ENCODE measurements at regions of chr6 and their contacts with region 1.

Region 1: GRCh38 chr6:15948930-15949900 is 179.7 kb upstream of the MYLIP start:
- DNase-seq: no peak
- H3K4me3 ChIP-seq: no peak overlapping the region
- CTCF ChIP-seq: no peak

Region 2: DNA sequence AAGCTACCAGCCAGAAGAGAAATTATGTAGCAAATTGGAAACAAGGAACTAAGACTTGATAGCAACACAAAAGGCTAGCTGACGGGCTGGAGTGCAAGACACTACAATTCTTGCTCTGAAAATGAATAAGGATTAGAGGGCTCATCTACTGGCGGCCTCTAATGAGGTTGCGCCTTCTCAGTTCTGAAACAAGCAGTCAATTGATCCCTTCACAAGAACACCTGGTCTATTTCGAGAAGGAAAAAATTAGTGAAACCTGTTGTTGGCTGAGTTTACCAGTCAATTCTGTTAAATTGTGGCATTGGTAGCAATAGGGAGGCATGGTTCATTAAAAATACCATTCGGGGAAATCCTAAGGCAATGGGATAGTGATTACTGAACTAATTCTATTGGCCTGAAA is 778.2 kb before region 1 on chr6:
- in situ Hi-C with region 1: no loop called
- DNase-seq: no peak
- H3K4me3 ChIP-seq: no peak overlapping the region
- CTCF ChIP-seq: no peak

Region 3: GRCh38 chr6:16058216-16059075 is 109.2 kb after region 1 on chr6:
- in situ Hi-C with region 1: loop called (anchors 5 kb)
- DNase-seq: no peak
- H3K4me3 ChIP-seq: no peak overlapping the region
- CTCF ChIP-seq: no peak

Measured in astrocyte of the cerebellum (primary cell).